CD4-positive, alpha-beta memory T cell (primary cell): ENCODE measurements at regions of chr19 and their contacts with region 1.

Region 1: DNA sequence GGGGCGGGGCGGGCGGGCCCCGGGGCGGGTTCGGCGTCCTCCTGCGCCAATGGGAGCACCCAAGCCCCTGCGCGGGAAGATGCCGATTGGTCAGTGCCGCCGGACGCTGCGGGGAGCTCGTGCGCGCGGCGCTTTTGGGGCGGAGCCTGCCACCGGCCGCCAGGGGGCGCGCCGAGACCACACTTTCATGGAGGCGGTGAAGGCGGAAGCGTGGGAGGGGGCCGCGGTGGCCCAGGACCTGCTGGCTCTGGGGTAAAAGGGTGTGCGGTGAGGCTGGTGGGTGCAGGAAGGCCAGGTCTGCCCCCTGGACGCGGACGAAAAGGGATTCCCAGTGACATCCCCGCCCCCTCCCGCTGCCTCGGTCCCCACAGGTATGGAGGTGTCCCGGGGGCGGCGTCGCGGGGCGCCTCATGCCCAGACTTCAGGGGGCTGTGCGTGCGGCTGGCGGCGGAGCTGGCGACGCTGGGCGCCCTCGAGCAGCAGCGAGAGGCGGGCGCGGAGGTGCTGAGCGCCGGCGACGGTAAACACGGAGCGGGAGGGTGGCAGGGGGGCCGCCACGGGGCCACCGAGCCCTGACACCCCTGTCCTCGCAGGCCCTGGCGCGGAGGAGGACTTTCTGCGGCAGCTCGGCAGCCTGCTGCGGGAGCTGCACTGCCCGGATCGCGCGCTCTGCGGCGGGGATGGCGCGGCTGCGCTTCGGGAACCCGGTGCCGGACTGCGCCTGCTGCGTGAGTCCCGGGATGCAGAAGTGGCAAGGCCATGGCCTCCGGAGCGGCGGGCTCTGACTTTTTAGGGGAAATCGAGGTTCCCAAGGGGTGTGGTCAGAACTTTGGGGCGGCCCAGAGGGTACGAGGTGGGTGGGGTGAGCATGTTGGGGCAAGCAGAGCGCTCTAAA is at the start of gene FAM98C:
- DNase-seq: peak; percentile 97 to 99 (median 98)
- H3K4me3 ChIP-seq: peak within 1 kb of the TSS; percentile 52 to 94
- H3K4me3 Mint-ChIP-seq: peak within 1 kb of the TSS; percentile 89 to 95 (median 90)
- H3K27ac ChIP-seq: peak within 1 kb of the TSS; percentile 77
- H3K27ac Mint-ChIP-seq: peak within 1 kb of the TSS; percentile 88 to 97 (median 96)
- H3K4me1 ChIP-seq: peaks cover 15% of the 10 kb centered on the region
- H3K4me1 Mint-ChIP-seq: peaks cover 2 to 17% (median 13%) of the 10 kb centered on the region in 4 donors
- H3K27me3 ChIP-seq: no peaks in the 10 kb centered on the region
- H3K27me3 Mint-ChIP-seq: no peaks in the 10 kb centered on the region
- total RNA-seq, gene FAM98C: 53.1 to 53.8 TPM

Region 2: GRCh38 chr19:38335949-38336637 is 67.1 kb before region 1 on chr19:
- CTCF ChIA-PET with region 1: interaction called, 7 read pairs
- POLR2A ChIA-PET with region 1: interaction called, 8 read pairs
- intact Hi-C with region 1: loop called (anchors 1 kb)
- DNase-seq: peak; percentile 93 to 97 (median 94)
- H3K4me3 ChIP-seq: peak overlapping the region; percentile 79 to 88
- H3K4me3 Mint-ChIP-seq: peak overlapping the region; percentile 93 to 99 (median 96)
- H3K27ac ChIP-seq: peak overlapping the region; percentile 83
- H3K27ac Mint-ChIP-seq: peak overlapping the region; percentile 94 to 100 (median 99)
- H3K4me1 ChIP-seq: peaks cover 7% of the 10 kb centered on the region
- H3K4me1 Mint-ChIP-seq: peaks cover 11 to 20% (median 16%) of the 10 kb centered on the region in 4 donors
- H3K27me3 ChIP-seq: no peaks in the 10 kb centered on the region
- H3K27me3 Mint-ChIP-seq: no peaks in the 10 kb centered on the region

Region 3: DNA sequence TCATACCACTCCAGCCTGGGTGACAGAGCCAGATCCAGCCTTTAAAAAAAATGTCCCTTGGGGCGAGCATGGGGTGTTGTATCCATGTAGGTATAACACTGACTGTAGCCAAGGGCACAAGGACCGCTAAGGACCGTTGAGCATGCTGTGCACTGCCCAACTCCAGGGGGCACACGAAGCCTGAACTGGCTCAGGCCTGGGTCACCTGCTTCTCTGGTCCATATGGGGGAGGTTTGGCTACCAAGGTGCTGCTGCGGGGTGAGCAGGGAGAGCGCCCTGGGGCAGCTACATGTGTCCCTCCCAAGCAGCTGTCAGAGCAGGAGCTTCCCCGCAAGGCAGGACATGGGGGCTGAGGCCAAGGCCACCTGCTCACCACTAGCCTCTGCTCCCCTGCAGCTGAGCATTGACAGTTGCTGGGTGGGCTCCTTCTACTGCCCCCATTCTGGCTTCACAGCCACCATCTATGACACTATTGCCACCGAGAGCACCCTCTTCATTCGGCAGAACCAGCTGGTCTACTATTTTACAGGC is 51.3 kb before region 1 on chr19:
- CTCF ChIA-PET with region 1: no interaction called
- POLR2A ChIA-PET with region 1: no interaction called
- intact Hi-C with region 1: no loop called
- DNase-seq: no peak
- H3K4me3 ChIP-seq: no peak overlapping the region
- H3K4me3 Mint-ChIP-seq: no peak overlapping the region
- H3K27ac ChIP-seq: no peak overlapping the region
- H3K27ac Mint-ChIP-seq: no peak overlapping the region
- H3K4me1 ChIP-seq: no peaks in the 10 kb centered on the region
- H3K4me1 Mint-ChIP-seq: no peaks in the 10 kb centered on the region
- H3K27me3 ChIP-seq: no peaks in the 10 kb centered on the region
- H3K27me3 Mint-ChIP-seq: no peaks in the 10 kb centered on the region

Region 4: GRCh38 chr19:38452428-38453366 is 49.5 kb after region 1 on chr19:
- CTCF ChIA-PET with region 1: no interaction called
- POLR2A ChIA-PET with region 1: no interaction called
- intact Hi-C with region 1: no loop called
- DNase-seq: no peak
- H3K4me3 ChIP-seq: no peak overlapping the region
- H3K4me3 Mint-ChIP-seq: no peak overlapping the region
- H3K27ac ChIP-seq: no peak overlapping the region
- H3K27ac Mint-ChIP-seq: peak overlapping the region in 1 of 7 donors; percentile 53
- H3K4me1 ChIP-seq: no peaks in the 10 kb centered on the region
- H3K4me1 Mint-ChIP-seq: no peaks in the 10 kb centered on the region
- H3K27me3 ChIP-seq: no peaks in the 10 kb centered on the region
- H3K27me3 Mint-ChIP-seq: peaks cover 0 to 2% of the 10 kb centered on the region in 2 donors

Region 5: GRCh38 chr19:38506723-38507550 is 103.7 kb after region 1 on chr19:
- CTCF ChIA-PET with region 1: interaction called, 8 read pairs
- POLR2A ChIA-PET with region 1: interaction called, 15 read pairs
- intact Hi-C with region 1: no loop called
- DNase-seq: peak; percentile 83 to 95 (median 93)
- H3K4me3 ChIP-seq: no peak overlapping the region
- H3K4me3 Mint-ChIP-seq: peak overlapping the region in 4 of 8 donors; percentile 15 to 48 (median 40)
- H3K27ac ChIP-seq: no peak overlapping the region
- H3K27ac Mint-ChIP-seq: peak overlapping the region in 5 of 7 donors; percentile 22 to 80 (median 60)
- H3K4me1 ChIP-seq: peaks cover 11% of the 10 kb centered on the region
- H3K4me1 Mint-ChIP-seq: peaks cover 2 to 14% (median 5%) of the 10 kb centered on the region in 4 donors
- H3K27me3 ChIP-seq: no peaks in the 10 kb centered on the region
- H3K27me3 Mint-ChIP-seq: peaks cover 0 to 2% of the 10 kb centered on the region in 2 donors

Region 6: GRCh38 chr19:38634757-38635482 is 231.7 kb after region 1 on chr19:
- CTCF ChIA-PET with region 1: interaction called, 45 read pairs
- POLR2A ChIA-PET with region 1: interaction called, 15 read pairs
- intact Hi-C with region 1: loop called (anchors 1 kb)
- DNase-seq: peak; percentile 59 to 74 (median 68)
- H3K4me3 ChIP-seq: no peak overlapping the region
- H3K4me3 Mint-ChIP-seq: peak overlapping the region in 5 of 8 donors; percentile 32 to 70 (median 57)
- H3K27ac ChIP-seq: peak overlapping the region; percentile 23
- H3K27ac Mint-ChIP-seq: peak overlapping the region; percentile 82 to 92 (median 90)
- H3K4me1 ChIP-seq: peaks cover 32% of the 10 kb centered on the region
- H3K4me1 Mint-ChIP-seq: peaks cover 10 to 41% (median 27%) of the 10 kb centered on the region in 4 donors
- H3K27me3 ChIP-seq: no peaks in the 10 kb centered on the region
- H3K27me3 Mint-ChIP-seq: no peaks in the 10 kb centered on the region

Region 7: DNA sequence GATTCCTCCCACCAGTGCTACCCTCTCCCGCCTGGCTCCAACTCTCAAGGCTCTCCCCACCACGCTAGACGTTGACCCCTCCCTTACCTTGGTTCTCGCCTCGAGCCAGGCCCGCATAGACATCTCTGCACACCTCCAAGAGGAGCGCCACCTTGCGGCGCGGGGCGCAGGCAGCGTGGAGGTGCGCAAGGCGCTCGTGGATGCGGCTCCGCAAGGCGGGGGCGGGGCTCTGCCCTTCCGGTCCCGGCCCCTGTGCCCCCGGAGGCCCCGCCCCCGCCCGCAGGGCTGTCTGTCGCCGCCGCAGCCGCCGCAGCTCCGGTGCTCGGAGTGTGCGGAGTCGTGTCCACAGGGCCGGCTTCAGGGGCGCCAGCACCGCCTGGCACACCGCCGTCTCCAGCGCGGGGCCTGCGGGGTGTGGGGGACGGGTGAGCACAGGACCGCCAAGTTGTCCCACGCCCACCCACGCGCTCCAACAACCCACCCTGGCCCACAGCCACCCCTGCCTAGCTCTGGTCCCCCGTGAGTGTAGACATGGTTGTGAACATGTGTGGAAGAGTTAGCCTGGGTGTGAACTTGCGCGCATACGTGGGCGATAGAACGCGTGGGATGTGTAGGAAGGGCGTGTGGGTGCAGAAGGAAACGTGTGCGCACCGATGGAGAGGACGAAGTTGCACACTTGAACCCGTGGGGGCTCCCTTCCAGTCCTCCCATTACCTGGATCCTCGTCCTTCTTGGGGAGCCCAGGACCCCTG is 466.8 kb after region 1 on chr19:
- CTCF ChIA-PET with region 1: interaction called, 8 read pairs
- POLR2A ChIA-PET with region 1: interaction called, 10 read pairs
- intact Hi-C with region 1: loop called (anchors 2 kb)
- DNase-seq: peak; percentile 92 to 96 (median 93)
- H3K4me3 ChIP-seq: peak overlapping the region; percentile 29 to 60
- H3K4me3 Mint-ChIP-seq: peak overlapping the region; percentile 88 to 94 (median 91)
- H3K27ac ChIP-seq: peak overlapping the region; percentile 66
- H3K27ac Mint-ChIP-seq: peak overlapping the region; percentile 83 to 97 (median 94)
- H3K4me1 ChIP-seq: peaks cover 40% of the 10 kb centered on the region
- H3K4me1 Mint-ChIP-seq: peaks cover 23 to 53% (median 38%) of the 10 kb centered on the region in 4 donors
- H3K27me3 ChIP-seq: no peaks in the 10 kb centered on the region
- H3K27me3 Mint-ChIP-seq: no peaks in the 10 kb centered on the region

Region 8: DNA sequence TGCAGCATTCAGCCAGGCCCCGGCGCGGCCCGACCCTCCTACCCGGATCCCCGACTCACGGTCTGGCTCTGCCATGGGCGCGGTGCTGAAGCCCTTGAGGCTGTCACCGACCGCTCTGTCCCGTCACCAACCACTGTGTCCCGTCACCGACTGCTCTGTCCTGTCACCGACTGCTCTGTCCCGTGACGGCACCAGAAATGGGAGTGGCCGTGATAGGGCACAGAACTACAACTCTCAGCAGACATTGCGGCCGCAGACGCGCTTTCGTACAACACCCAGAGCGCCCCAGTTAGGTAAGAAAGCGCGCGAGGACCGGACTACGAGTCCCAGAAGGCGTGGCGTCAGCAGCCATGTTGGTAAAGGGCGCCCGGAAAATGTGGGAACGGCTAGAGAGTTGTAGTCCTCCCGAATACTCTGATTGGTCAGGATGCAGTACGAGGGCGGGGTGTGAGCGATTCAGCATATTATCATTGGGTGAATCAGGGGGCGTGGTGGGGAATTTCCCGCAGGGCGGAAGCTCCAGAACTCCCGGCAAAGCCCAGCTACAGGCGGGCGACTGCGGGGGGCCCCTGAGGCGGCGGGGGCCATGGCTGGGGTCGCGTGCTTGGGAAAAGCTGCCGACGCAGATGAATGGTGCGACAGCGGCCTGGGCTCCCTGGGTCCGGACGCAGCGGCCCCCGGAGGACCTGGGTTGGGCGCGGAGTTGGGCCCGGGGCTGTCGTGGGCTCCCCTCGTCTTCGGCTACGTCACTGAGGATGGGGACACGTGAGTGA is 496.4 kb after region 1 on chr19 and contains the starts of genes NFKBIB and SIRT2:
- CTCF ChIA-PET with region 1: interaction called, 7 read pairs
- POLR2A ChIA-PET with region 1: interaction called, 12 read pairs
- intact Hi-C with region 1: no loop called
- DNase-seq: peak; percentile 98 to 100 (median 100)
- H3K4me3 ChIP-seq: peak within 1 kb of the TSS; percentile 71 to 87
- H3K4me3 Mint-ChIP-seq: peak within 1 kb of the TSS; percentile 92 to 98 (median 96)
- H3K27ac ChIP-seq: peak within 1 kb of the TSS; percentile 99
- H3K27ac Mint-ChIP-seq: peak within 1 kb of the TSS; percentile 90 to 100 (median 99)
- H3K4me1 ChIP-seq: peaks cover 34% of the 10 kb centered on the region
- H3K4me1 Mint-ChIP-seq: peaks cover 17 to 59% (median 39%) of the 10 kb centered on the region in 4 donors
- H3K27me3 ChIP-seq: no peaks in the 10 kb centered on the region
- H3K27me3 Mint-ChIP-seq: no peaks in the 10 kb centered on the region
- total RNA-seq, gene NFKBIB: 23.9 to 26.0 TPM
- total RNA-seq, gene SIRT2: 47.0 to 50.0 TPM